ENCODE measurements at regions of chr16 and their contacts with region 1.

Region 1: GRCh38 chr16:48156790-48157209 is 1.0 kb upstream of the ABCC12 start:
- DNase-seq: no peak
- ATAC-seq: peak; percentile 84
- H3K4me3 ChIP-seq: no peak overlapping the region
- H3K27ac ChIP-seq: peak overlapping the region; percentile 61; the same call in 1 of the 2 replicates
- H3K4me1 ChIP-seq: peaks cover 2% of the 10 kb centered on the region; the same call in 1 of the 2 replicates
- H3K27me3 ChIP-seq: no peaks in the 10 kb centered on the region
- CTCF ChIP-seq: peak; percentile 91

Region 2: DNA sequence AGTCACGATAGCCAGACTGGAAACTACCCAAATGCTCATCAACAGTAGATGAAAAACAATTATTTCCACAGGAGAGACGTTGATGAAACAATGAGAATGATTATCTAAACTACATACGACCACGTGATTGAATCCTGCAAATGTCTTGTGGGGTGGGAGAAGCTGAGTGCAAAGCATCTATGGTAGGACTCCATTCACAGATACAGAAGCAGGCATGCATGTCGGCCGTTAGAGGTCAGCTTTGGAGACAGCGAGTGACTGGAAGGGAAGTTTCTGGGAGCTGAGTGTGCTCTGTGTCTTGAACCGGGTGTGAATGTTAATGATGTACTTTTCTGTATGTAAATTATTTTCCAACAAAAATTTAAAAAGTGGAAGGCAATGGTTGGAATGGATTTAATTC is 1111.8 kb before region 1 on chr16:
- CTCF ChIA-PET with region 1: no interaction called
- POLR2A ChIA-PET with region 1: no interaction called
- in situ Hi-C with region 1: no loop called
- intact Hi-C with region 1: loop called (anchors 10 kb)
- DNase-seq: no peak
- ATAC-seq: no peak
- H3K4me3 ChIP-seq: no peak overlapping the region
- H3K27ac ChIP-seq: no peak overlapping the region
- H3K4me1 ChIP-seq: no peaks in the 10 kb centered on the region
- H3K27me3 ChIP-seq: no peaks in the 10 kb centered on the region
- CTCF ChIP-seq: no peak